Right lobe of liver (tissue), 6 donors: ENCODE measurements at regions of chr15 and their contacts with region 1.

Region 1: GRCh38 chr15:25701721-25702465 is 161.2 kb downstream of the ATP10A start:
- DNase-seq: peak in 1 of 3 donors; percentile 27
- ATAC-seq: no peak
- H3K4me3 ChIP-seq: no peak overlapping the region
- H3K27ac ChIP-seq: no peak overlapping the region
- H3K4me1 ChIP-seq: no peaks in the 10 kb centered on the region
- H3K27me3 ChIP-seq: no peaks in the 10 kb centered on the region
- CTCF ChIP-seq: no peak
- POLR2A ChIP-seq: no peak

Region 2: GRCh38 chr15:25416693-25417092 is 285.2 kb before region 1 on chr15:
- intact Hi-C with region 1: no loop called
- DNase-seq: no peak
- ATAC-seq: peak in 3 of 4 donors; percentile 31 to 89 (median 36)
- H3K4me3 ChIP-seq: no peak overlapping the region
- H3K27ac ChIP-seq: no peak overlapping the region
- H3K4me1 ChIP-seq: peaks cover 0 to 8% (median 0%) of the 10 kb centered on the region in 4 donors
- H3K27me3 ChIP-seq: no peaks in the 10 kb centered on the region
- CTCF ChIP-seq: no peak
- POLR2A ChIP-seq: no peak

Region 3: GRCh38 chr15:25510146-25510545 is 191.7 kb before region 1 on chr15:
- intact Hi-C with region 1: loop called in 1 of 2 experiments (anchors 10 kb)
- DNase-seq: no peak
- ATAC-seq: no peak
- H3K4me3 ChIP-seq: no peak overlapping the region
- H3K27ac ChIP-seq: no peak overlapping the region
- H3K4me1 ChIP-seq: no peaks in the 10 kb centered on the region
- H3K27me3 ChIP-seq: no peaks in the 10 kb centered on the region
- CTCF ChIP-seq: no peak
- POLR2A ChIP-seq: no peak